Dorsolateral prefrontal cortex (tissue), 120 donors: ENCODE measurements at regions of chr3 and their contacts with region 1.

Region 1: DNA sequence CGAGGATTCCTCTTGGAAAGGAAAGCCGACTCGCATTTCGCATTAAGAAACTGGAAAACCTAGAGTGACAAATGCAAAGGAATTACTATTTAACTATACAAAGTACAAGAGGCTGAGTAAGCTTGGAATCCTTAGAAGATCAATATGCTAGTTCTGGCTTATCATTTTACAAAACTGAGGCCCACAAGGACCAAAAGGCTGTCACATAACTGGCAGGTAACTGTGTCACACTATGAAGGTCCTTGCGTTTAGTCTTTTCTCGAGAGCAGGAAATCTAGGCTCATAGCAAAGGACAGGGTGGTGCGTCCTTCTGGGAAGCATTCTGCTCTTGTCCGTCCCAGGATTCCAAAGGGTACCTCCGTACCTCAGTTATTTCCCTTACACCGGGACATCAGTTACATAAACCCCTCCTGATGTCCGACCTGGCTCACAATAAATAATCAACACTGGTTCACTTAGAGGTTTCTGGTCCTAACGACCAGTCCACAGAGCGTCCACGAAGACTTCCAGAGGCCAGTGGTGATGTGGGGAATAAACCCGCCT is 577 bp downstream of the RPL24 start:
- DNase-seq: no peak
- H3K4me3 ChIP-seq: peak overlapping the region; percentile 45 to 95 (median 80)
- H3K27ac ChIP-seq: peak overlapping the region; percentile 75 to 98 (median 93)
- H3K27me3 ChIP-seq: no peaks in the 10 kb centered on the region
- CTCF ChIP-seq: no peak

Region 2: GRCh38 chr3:101512646-101513418 is 173.1 kb before region 1 on chr3 and contains the start of gene SENP7:
- intact Hi-C with region 1: loop called in 1 of 2 experiments (anchors 5 kb)
- DNase-seq: peak; percentile 63 to 79 (median 75)
- H3K4me3 ChIP-seq: peak within 1 kb of the TSS; percentile 57 to 97 (median 87)
- H3K27ac ChIP-seq: peak within 1 kb of the TSS; percentile 71 to 98 (median 93)
- H3K27me3 ChIP-seq: peaks cover 0 to 12% (median 0%) of the 10 kb centered on the region in 45 donors
- CTCF ChIP-seq: peak in 8 of 56 donors; percentile 3 to 36 (median 13)
- total RNA-seq, gene SENP7: 16.3 to 38.9 (median 28.5) TPM

Region 3: GRCh38 chr3:101561630-101562328 is 124.2 kb before region 1 on chr3 and contains the start of gene TRMT10C:
- intact Hi-C with region 1: no loop called
- DNase-seq: peak; percentile 89 to 96 (median 94)
- H3K4me3 ChIP-seq: peak within 1 kb of the TSS; percentile 60 to 99 (median 89)
- H3K27ac ChIP-seq: peak within 1 kb of the TSS; percentile 4 to 93 (median 82)
- H3K27me3 ChIP-seq: peaks cover 0 to 20% (median 0%) of the 10 kb centered on the region in 45 donors
- CTCF ChIP-seq: peak in 27 of 56 donors; percentile 9 to 44 (median 26)
- total RNA-seq, gene TRMT10C: 8.7 to 26.3 (median 18.7) TPM

Region 4: DNA sequence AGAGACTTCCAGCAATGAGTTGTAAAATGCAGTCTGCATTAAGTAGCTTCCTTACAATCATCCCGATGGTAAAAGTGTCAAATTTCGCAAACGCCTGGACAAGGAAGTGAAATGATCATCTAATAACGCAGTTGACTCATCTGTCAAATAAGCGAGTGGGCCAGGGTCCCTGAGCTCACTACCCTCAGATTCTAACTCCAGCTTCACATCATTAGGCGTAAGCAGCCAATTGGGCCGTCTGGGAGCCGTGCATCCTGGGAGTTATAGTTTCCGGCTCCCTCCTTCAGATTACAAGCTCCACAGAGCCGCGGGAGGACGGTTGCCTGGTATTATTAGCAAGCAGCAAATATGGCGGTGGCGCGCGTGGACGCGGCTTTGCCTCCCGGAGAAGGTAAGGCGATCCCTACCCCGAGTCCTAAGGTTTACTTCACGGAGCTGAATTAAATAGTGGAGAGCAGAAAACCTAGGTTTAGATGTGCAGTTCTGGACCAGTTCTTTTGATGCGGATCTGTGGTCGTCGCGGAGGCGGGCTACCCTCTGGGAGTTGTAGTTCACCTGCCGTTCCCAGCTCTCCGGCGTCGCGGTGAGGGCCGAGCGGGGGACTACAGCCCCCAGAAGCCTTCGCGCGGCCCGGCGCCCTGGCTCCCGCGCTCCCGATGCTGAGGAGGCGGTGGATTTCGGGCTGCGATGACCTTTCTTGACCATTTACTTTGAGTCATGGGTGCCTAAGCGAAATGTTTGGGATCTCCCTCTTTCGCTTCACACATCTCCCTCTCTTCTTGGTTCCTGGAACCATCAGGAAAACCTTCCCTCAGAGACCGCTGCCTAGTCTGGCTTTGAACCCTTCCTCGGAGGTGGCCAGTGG is 38.6 kb after region 1 on chr3 and contains the start of gene CEP97:
- intact Hi-C with region 1: loop called (anchors 5 kb)
- DNase-seq: peak; percentile 86 to 98 (median 94)
- H3K4me3 ChIP-seq: peak within 1 kb of the TSS; percentile 67 to 100 (median 88)
- H3K27ac ChIP-seq: peak within 1 kb of the TSS; percentile 12 to 100 (median 95)
- H3K27me3 ChIP-seq: no peaks in the 10 kb centered on the region
- CTCF ChIP-seq: peak in 29 of 56 donors; percentile 4 to 54 (median 23)
- total RNA-seq, gene CEP97: 19.1 to 55.5 (median 35.0) TPM

Region 5: DNA sequence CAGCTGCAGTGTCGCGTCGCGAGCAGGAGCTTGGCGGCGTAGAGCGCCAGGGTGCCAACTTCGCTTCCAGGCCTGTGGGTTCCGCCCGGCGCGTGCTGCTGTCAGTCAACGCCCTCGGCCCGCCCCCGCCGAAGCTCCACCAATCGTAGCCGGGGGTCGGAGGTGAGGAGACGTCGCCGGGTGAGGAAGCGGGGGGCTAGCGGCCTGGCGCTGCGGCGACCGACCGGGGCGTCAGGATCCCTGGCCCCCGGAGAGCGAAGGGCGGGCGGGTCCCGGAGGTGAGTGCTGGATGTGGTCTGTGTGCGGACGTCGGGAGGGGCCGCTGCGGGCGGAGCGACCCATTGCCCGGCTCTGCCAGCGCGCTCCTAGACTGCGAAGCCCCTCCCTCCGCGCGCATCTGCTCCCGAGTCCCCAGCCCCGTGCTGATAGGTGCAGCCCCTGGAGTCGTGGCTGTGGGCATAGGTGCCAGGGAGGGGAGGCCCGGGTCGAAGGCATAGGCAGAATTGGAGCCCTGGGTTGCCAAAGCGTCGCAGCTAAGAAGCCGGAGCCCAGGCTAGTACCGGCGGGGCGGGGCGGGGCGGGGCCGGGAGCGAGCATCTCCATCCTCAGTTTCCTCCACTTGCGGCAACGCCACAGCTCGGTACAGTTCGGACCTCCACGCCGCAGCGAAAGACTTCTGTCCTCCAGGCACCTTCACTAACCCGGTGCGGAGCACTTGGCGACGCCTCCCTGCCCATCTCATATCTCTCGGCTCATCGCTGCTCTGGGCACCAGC is 93.3 kb after region 1 on chr3 and contains the start of gene NXPE3:
- intact Hi-C with region 1: loop called (anchors 5 kb)
- DNase-seq: peak; percentile 93 to 98 (median 97)
- H3K4me3 ChIP-seq: peak within 1 kb of the TSS; percentile 62 to 98 (median 92)
- H3K27ac ChIP-seq: peak within 1 kb of the TSS; percentile 60 to 98 (median 93)
- H3K27me3 ChIP-seq: no peaks in the 10 kb centered on the region
- CTCF ChIP-seq: peak in 30 of 56 donors; percentile 7 to 48 (median 21)
- total RNA-seq, gene NXPE3: 30.4 to 103 (median 51.4) TPM

Region 6: DNA sequence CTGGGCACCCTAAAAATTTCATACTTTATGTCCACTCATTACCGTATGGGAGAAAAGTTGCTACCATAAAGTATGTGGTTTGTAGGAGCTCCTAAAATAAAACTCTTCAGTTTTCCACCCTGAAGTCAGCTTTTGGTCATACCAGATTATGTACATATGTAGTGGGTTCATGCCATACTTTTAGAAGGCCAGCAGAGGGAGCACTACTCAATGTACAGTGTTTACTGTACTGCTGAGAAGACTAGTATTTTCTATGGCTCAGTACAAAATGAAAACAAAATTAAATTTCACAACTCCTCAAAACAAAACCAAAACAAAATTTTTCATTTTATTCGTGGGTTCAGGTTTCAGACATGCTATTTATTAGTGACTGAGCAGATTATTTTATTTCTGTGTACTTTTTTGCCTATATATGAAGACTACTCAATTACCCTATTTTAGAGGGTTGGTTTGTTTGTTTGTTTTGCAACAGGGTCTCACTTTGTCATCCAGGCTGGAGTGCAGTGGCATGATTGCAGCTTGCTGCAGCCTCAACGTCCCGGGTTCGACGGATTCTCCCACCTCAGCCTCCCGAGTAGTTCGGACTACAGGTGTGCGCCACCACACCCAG is 117.3 kb after region 1 on chr3:
- intact Hi-C with region 1: loop called in 1 of 2 experiments (anchors 5 kb)
- DNase-seq: peak in 3 of 10 donors; percentile 54 to 69 (median 60)
- H3K4me3 ChIP-seq: no peak overlapping the region
- H3K27ac ChIP-seq: peak overlapping the region in 30 of 59 donors; percentile 3 to 86 (median 50)
- H3K27me3 ChIP-seq: no peaks in the 10 kb centered on the region
- CTCF ChIP-seq: peak; percentile 69 to 95 (median 85)

Region 7: GRCh38 chr3:101849051-101849720 is 163.2 kb after region 1 on chr3 and contains the start of gene NFKBIZ:
- intact Hi-C with region 1: no loop called
- DNase-seq: peak; percentile 81 to 94 (median 86)
- H3K4me3 ChIP-seq: peak within 1 kb of the TSS; percentile 64 to 95 (median 86)
- H3K27ac ChIP-seq: peak within 1 kb of the TSS; percentile 71 to 99 (median 95)
- H3K27me3 ChIP-seq: no peaks in the 10 kb centered on the region
- CTCF ChIP-seq: peak in 10 of 56 donors; percentile 2 to 36 (median 6)
- total RNA-seq, gene NFKBIZ: 4.6 to 36.6 (median 15.2) TPM

Region 8: DNA sequence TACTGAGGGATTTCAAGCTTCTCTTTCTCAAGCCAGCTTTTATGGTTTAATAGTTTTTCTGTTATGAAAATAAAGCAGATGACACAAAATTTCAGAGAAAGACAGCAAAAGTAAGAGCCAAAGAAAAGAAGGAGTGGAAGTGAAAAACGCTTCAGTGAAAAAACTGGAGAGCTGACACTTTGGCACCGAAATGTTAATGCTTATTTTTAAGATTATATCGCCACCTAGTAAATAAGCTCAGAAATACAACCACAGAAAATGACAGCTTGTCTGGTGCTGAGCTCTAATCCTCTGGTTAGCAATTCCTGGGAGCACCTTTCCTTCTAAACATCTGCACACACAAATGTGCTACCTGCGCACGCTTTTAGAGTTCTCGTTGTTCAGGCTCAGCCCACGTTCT is 850.5 kb after region 1 on chr3:
- intact Hi-C with region 1: loop called in 1 of 2 experiments (anchors 5 kb)
- DNase-seq: no peak
- H3K4me3 ChIP-seq: peak overlapping the region in 10 of 59 donors; percentile 5 to 45 (median 16)
- H3K27ac ChIP-seq: no peak overlapping the region
- H3K27me3 ChIP-seq: peaks cover 0 to 14% (median 0%) of the 10 kb centered on the region in 45 donors
- CTCF ChIP-seq: peak; percentile 18 to 83 (median 63)